Activated B cell treated with CpG ODN at 0.5 μM for 24 hours (primary cell): ENCODE measurements at regions of chr2 and their contacts with region 1.

Region 1: GRCh38 chr2:143974262-143974661 is 545.7 kb downstream of the ZEB2 start:
- DNase-seq: no peak
- ATAC-seq: no peak
- H3K4me3 Mint-ChIP-seq: no peak overlapping the region
- H3K27ac Mint-ChIP-seq: no peak overlapping the region
- H3K4me1 Mint-ChIP-seq: no peaks in the 10 kb centered on the region
- H3K27me3 Mint-ChIP-seq: no peaks in the 10 kb centered on the region
- CTCF ChIP-seq: no peak

Region 2: DNA sequence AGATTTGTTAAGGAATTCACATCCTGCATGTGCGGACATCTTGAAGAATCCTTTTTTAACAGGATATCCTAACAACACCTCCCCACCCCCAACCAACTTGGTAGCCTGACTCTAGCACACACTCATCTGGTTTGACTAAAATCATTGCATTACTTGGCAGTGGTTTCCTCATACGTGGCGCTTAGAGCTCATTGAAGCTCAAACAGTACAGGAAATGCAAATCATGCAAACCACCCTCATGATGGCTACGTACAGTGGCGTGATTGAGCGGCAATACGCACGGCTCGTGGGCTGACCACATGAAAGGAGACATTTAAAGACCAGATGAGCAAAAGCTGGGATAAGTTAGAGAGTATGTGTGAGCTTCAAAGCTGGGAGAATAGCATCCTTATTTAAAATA is 209.5 kb after region 1 on chr2:
- CTCF ChIA-PET with region 1: no interaction called
- POLR2A ChIA-PET with region 1: no interaction called
- intact Hi-C with region 1: loop called (anchors 1 kb)
- DNase-seq: peak; percentile 35
- ATAC-seq: peak; percentile 96
- H3K4me3 Mint-ChIP-seq: peak overlapping the region; percentile 82
- H3K27ac Mint-ChIP-seq: peak overlapping the region; percentile 85
- H3K4me1 Mint-ChIP-seq: peaks cover 28% of the 10 kb centered on the region
- H3K27me3 Mint-ChIP-seq: no peaks in the 10 kb centered on the region
- CTCF ChIP-seq: no peak